A549 (cell line): ENCODE measurements at regions of chr16 and their contacts with region 1.

Region 1: GRCh38 chr16:8878521-8878911 is 3.6 kb upstream of the LITAFD start:
- DNase-seq: peak in 1 of 2 experiments; percentile 51
- ATAC-seq: peak; percentile 48 to 52; a peak in 4 of 6 replicates
- H3K4me3 ChIP-seq: no peak overlapping the region
- H3K27ac ChIP-seq: peak overlapping the region; percentile 71 to 83
- H3K4me1 ChIP-seq: peaks cover 17% of the 10 kb centered on the region
- CTCF ChIP-seq: no peak
- EP300 ChIP-seq: no peak
- POLR2A ChIP-seq: no peak
- RAD21 ChIP-seq: no peak

Region 2: DNA sequence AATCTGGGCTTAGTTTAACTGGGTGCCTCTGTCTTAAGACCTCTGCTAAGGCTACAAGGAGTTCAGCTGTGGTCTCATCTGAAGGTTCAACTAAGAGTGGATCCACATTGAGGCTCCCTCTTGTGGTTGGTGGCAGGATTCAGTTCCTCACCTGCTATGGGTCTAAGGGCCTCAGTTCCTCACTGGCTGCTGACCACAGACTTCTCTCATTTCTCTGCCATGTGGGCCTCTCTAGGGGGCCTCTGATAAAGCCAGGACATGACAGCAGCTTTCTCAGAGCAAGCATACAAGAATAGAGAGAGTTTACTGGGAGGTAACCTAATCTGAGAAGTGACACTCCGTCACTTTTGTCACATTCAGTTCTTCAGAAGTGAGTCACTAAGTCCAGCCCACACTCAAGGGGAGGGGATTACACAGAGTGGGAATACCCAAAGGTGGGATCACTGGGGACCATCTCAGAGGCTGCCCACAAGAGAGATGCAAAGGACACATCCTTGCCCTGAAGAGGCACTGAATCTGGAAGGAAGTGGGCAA is 223.3 kb before region 1 on chr16:
- CTCF ChIA-PET with region 1: interaction called, 47 read pairs
- POLR2A ChIA-PET with region 1: no interaction called
- DNase-seq: peak in 1 of 2 experiments; percentile 17
- ATAC-seq: peak; percentile 50 to 64; a peak in 4 of 6 replicates
- H3K4me3 ChIP-seq: no peak overlapping the region
- H3K27ac ChIP-seq: no peak overlapping the region
- H3K4me1 ChIP-seq: no peaks in the 10 kb centered on the region
- CTCF ChIP-seq: no peak
- EP300 ChIP-seq: no peak
- POLR2A ChIP-seq: no peak
- RAD21 ChIP-seq: no peak

Region 3: GRCh38 chr16:8822403-8822802 is 56.1 kb before region 1 on chr16:
- CTCF ChIA-PET with region 1: interaction called, 14 read pairs
- POLR2A ChIA-PET with region 1: no interaction called
- DNase-seq: no peak
- ATAC-seq: no peak
- H3K4me3 ChIP-seq: no peak overlapping the region
- H3K27ac ChIP-seq: no peak overlapping the region
- H3K4me1 ChIP-seq: no peaks in the 10 kb centered on the region
- CTCF ChIP-seq: no peak
- EP300 ChIP-seq: no peak
- POLR2A ChIP-seq: no peak
- RAD21 ChIP-seq: no peak

Region 4: GRCh38 chr16:8850279-8850885 is 28.1 kb before region 1 on chr16:
- CTCF ChIA-PET with region 1: interaction called, 44 read pairs
- POLR2A ChIA-PET with region 1: no interaction called
- DNase-seq: no peak
- ATAC-seq: peak in 1 of 2 experiments; percentile 13; a peak in 3 of 6 replicates
- H3K4me3 ChIP-seq: no peak overlapping the region
- H3K27ac ChIP-seq: peak overlapping the region in 1 of 2 experiments; percentile 35; a peak in 1 of 6 replicates
- H3K4me1 ChIP-seq: peaks cover 23% of the 10 kb centered on the region
- CTCF ChIP-seq: no peak
- EP300 ChIP-seq: no peak
- POLR2A ChIP-seq: no peak
- RAD21 ChIP-seq: no peak

Region 5: DNA sequence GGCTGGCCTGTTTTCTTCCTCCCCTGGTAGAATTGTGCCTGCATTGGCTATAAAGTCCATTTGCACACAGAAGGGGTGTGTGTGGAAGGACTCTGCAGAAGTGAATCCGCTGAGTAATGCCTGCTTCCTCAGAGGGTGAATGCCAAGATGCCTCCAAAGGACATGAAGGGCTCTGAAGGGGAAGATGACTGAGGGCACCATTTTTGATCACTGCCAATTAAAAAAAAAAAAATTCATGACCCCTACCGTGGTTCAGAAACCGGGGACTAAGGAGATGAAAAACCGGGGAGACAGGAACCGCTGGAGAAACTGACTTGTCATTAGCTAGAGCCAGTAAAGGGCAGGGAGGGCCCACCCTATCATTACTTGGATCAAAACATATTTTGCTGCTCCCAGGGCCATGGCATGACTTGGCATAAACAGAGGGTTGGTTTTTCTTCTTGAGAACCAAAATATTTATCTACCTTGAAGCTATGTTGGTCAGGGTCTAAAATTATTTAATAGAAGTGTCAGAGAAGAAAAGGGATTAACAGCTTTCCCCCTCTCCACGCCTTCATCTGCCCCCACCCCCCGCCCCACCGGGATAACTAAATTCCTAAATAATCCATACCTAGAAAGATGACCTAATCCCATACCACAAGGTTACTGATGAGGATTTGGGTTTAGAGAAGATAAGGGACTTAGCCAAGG is 88.8 kb after region 1 on chr16:
- CTCF ChIA-PET with region 1: no interaction called
- POLR2A ChIA-PET with region 1: no interaction called
- DNase-seq: peak in 1 of 2 experiments; percentile 36
- ATAC-seq: 0 out of 6 replicates have a peak, but pooled peaks of 1 of the 2 experiments have one; percentile 5
- H3K4me3 ChIP-seq: no peak overlapping the region
- H3K27ac ChIP-seq: peak overlapping the region; percentile 12 to 74; a peak in 4 of 6 replicates
- H3K4me1 ChIP-seq: peaks cover 12% of the 10 kb centered on the region; the same call in 2 of the 3 replicates
- CTCF ChIP-seq: no peak
- EP300 ChIP-seq: no peak
- POLR2A ChIP-seq: no peak
- RAD21 ChIP-seq: no peak